ENCODE measurements at regions of chr15 and their contacts with region 1.

Region 1: DNA sequence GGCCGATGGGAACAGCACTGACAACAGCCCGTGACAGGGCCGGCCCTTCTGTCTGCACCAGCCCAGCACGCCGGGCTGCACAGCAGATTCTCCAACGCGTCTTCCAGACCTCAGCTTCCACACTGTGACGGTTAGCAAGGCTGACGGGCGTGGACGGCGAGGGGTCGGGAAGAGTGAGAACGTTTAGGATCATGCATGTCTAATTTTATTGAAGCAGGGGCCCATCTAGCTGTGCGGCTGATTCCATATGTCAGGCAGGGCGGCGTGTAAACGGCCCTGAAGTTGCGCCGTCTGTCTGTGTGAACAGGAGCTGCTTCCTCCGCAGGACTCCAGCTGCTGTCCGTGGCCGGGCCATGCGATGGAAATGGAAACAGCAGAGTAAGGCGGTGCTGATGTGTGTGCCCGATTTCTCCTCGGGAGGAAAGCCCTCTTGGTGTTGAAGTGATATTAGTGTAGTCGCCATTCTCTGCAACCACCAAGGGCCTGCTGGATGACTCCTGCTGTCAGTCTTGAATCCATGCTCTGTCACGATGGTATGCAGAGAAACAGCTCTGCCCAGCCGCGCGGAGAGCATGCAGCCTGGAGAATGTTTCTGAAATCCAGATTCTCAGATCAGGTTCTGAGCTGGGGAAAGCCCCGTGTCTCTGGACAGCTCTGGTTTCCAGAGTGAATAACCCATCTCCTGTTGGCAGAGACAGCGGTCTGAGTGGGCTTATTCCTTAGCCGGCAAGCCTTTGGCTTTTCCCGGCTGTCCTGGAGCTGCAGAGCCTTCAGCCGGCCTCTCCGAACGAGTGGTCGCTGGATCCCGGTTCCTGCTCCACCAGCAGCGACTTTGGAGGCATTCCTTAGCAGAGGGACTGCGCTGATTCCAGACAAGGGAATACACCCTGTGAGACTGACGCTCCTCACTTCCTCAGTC is 158.1 kb upstream of the UBE3A start:
- DNase-seq: no peak
- H3K4me3 ChIP-seq: peak overlapping the region in 2 of 3 donors; percentile 10 to 41
- H3K27ac ChIP-seq: no peak overlapping the region
- H3K4me1 ChIP-seq: no peaks in the 10 kb centered on the region
- H3K27me3 ChIP-seq: no peaks in the 10 kb centered on the region
- CTCF ChIP-seq: no peak
- POLR2A ChIP-seq: no peak

Region 2: GRCh38 chr15:26051761-26052675 is 455.1 kb after region 1 on chr15:
- intact Hi-C with region 1: no loop called
- DNase-seq: no peak
- H3K4me3 ChIP-seq: no peak overlapping the region
- H3K27ac ChIP-seq: peak overlapping the region in 1 of 2 donors; percentile 7
- H3K4me1 ChIP-seq: no peaks in the 10 kb centered on the region
- H3K27me3 ChIP-seq: peaks cover 0 to 17% of the 10 kb centered on the region in 2 donors
- CTCF ChIP-seq: no peak
- POLR2A ChIP-seq: no peak

Region 3: DNA sequence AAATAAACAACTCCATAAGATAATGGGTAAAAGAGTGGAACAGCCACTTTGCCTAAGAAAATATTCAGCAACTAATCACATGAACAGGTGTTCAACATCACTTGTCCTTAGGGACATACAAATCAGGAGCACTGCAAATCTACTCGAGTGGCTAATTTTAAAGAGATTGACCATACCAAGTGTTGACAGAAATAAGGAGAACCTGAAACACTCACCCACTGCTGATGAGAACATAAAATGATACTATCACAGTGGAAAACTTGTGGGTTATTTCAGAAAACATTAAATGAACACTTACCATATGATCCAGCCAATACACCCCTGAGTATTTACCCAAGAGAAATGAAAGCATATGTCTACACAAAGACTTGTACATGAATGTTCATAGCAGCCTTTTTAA is 1105.5 kb after region 1 on chr15:
- intact Hi-C with region 1: loop called (anchors 5 kb)
- DNase-seq: no peak
- H3K4me3 ChIP-seq: no peak overlapping the region
- H3K27ac ChIP-seq: no peak overlapping the region
- H3K4me1 ChIP-seq: no peaks in the 10 kb centered on the region
- H3K27me3 ChIP-seq: no peaks in the 10 kb centered on the region
- CTCF ChIP-seq: no peak
- POLR2A ChIP-seq: no peak

Measured in breast epithelium (tissue), 4 donors.